Activated CD8-positive, alpha-beta T cell treated with anti-CD3 and anti-CD28 coated beads for 36 hours (primary cell): ENCODE measurements at regions of chr2 and their contacts with region 1.

Region 1: DNA sequence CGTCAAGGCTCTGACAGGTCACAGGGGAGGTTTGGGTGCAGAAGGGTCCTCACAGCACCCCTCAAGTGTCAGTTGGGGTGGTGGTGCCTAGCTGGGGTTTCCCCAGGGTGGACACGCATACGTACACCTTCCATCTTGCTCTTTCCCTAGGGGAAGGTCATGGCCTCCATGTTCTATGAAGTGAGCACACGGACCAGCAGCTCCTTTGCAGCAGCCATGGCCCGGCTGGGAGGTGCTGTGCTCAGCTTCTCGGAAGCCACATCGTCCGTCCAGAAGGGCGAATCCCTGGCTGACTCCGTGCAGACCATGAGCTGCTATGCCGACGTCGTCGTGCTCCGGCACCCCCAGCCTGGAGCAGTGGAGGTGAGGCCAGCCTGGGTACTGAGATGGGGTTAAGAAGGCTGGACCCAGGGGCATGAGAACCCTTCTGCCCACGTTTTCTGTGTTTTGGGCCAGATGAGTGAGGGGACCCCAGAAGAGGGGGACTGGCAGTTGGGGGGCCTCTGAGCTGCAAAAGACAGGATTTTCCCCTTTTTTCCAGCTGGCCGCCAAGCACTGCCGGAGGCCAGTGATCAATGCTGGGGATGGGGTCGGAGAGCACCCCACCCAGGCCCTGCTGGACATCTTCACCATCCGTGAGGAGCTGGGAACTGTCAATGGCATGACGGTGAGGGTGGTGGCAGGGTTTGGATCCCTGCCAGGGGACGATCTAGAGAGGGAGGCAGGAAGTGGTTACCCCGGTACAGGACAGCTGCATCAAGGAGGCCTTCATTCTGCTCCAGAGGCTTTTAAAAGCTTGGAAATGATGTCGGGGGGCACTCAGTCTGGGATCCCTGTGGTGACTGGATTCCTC is 20.9 kb downstream of the SLC30A3 start:
- DNase-seq: no peak
- ATAC-seq: no peak
- H3K4me3 Mint-ChIP-seq: no peak overlapping the region
- H3K27ac Mint-ChIP-seq: no peak overlapping the region
- H3K4me1 Mint-ChIP-seq: peaks cover 2% of the 10 kb centered on the region
- H3K27me3 Mint-ChIP-seq: no peaks in the 10 kb centered on the region
- CTCF ChIP-seq: no peak

Region 2: GRCh38 chr2:27217217-27218121 is 24.5 kb before region 1 on chr2 and contains the start of gene CAD:
- CTCF ChIA-PET with region 1: no interaction called
- POLR2A ChIA-PET with region 1: interaction called, 10 read pairs
- intact Hi-C with region 1: no loop called
- DNase-seq: peak; percentile 92
- ATAC-seq: peak; percentile 94
- H3K4me3 Mint-ChIP-seq: peak within 1 kb of the TSS; percentile 93
- H3K27ac Mint-ChIP-seq: peak within 1 kb of the TSS; percentile 88
- H3K4me1 Mint-ChIP-seq: peaks cover 50% of the 10 kb centered on the region
- H3K27me3 Mint-ChIP-seq: no peaks in the 10 kb centered on the region
- CTCF ChIP-seq: no peak
- total RNA-seq, gene CAD: 125 to 127 TPM